Caco-2 (cell line): ENCODE measurements at regions of chr1 and their contacts with region 1.

Region 1: GRCh38 chr1:99481391-99481996 is 164.4 kb upstream of the PALMD start:
- DNase-seq: peak; percentile 28 to 55
- H3K4me3 ChIP-seq: no peak overlapping the region
- H3K4me3 Mint-ChIP-seq: no peak overlapping the region
- H3K27ac Mint-ChIP-seq: no peak overlapping the region
- H3K4me1 ChIP-seq: no peaks in the 10 kb centered on the region
- H3K4me1 Mint-ChIP-seq: no peaks in the 10 kb centered on the region
- H3K27me3 ChIP-seq: no peaks in the 10 kb centered on the region
- H3K27me3 Mint-ChIP-seq: peaks cover 4% of the 10 kb centered on the region
- CTCF ChIP-seq: peak; percentile 21 to 60

Region 2: DNA sequence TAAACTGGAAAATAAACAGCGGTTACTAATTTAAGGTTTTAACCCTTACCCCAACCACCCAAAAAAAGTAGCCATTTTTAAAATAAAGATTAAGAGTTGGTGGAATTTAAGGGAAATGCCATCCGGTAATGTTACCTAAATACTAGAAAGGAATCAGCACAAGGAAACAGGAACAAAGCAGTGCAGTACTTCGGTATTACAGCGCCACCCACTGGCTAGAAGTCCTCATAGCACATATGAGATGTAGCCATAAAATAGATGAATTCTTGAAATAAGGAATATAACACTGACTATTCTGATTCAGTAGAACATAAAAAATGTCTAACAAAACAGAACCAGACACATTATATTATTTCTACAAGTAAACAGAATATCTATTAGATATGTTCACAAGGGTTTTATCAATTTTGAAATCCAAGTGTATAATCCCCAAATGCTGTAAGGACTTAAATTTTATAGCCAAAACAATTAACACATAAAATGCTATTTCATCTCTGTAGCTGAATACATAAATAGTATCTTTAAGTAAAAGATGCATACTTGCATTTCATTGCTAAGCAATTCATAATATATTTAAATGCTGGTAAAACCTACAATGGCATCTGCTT is 226.1 kb after region 1 on chr1:
- CTCF ChIA-PET with region 1: no interaction called
- POLR2A ChIA-PET with region 1: no interaction called
- intact Hi-C with region 1: loop called (anchors 2 kb)
- DNase-seq: peak; percentile 40 to 51
- H3K4me3 ChIP-seq: no peak overlapping the region
- H3K4me3 Mint-ChIP-seq: no peak overlapping the region
- H3K27ac Mint-ChIP-seq: no peak overlapping the region
- H3K4me1 ChIP-seq: no peaks in the 10 kb centered on the region
- H3K4me1 Mint-ChIP-seq: no peaks in the 10 kb centered on the region
- H3K27me3 ChIP-seq: no peaks in the 10 kb centered on the region
- H3K27me3 Mint-ChIP-seq: no peaks in the 10 kb centered on the region
- CTCF ChIP-seq: peak; percentile 63